ENCODE measurements at regions of chr4 and their contacts with region 1.

Region 1: GRCh38 chr4:89110986-89111832 is at the start of gene TIGD2:
- DNase-seq: peak; percentile 81
- H3K4me3 Mint-ChIP-seq: peak within 1 kb of the TSS; percentile 76
- H3K27ac Mint-ChIP-seq: no peak within 1 kb of the TSS
- H3K4me1 Mint-ChIP-seq: peaks cover 11% of the 10 kb centered on the region
- H3K27me3 Mint-ChIP-seq: peaks cover 18% of the 10 kb centered on the region
- total RNA-seq, gene TIGD2: 1.1 to 1.3 TPM

Region 2: DNA sequence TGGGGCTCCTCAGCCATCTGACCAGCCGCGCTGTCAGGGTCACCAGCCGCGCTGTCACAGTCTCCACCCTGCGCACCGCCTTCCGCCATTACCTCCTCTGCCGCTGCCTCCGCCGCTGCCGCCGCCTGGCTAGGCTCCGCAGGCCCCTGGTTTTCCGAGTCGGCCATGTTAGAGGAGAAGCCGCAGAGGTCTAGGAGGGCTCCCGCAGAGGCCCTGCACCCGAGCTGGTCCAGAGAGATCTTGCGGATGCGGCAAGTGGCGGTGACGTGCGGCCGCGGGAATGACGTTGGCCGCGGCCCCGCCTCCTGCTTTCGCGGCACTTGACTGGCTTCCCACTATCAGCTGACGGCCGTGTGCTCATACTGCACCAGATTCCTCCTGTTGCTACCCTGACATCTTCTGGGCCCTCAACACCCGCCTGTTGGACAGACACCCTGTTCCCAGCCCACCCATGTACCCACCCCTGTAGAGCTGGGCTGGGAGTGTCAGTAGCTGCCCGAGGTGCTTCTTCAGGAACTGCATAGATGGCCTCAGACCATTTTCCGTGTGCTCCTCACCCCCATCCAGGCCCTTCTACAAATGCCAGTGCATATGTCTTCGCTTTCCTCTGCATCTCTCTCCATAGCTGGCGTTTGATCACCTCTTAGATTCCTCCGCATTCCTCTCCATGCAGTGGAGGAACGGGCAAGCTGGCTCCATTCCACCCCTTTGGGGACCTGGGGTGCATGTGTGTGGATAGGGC is 413.4 kb before region 1 on chr4 and contains the start of gene NAP1L5:
- CTCF ChIA-PET with region 1: no interaction called
- intact Hi-C with region 1: loop called (anchors 5 kb)
- DNase-seq: peak; percentile 74
- H3K4me3 Mint-ChIP-seq: peak within 1 kb of the TSS; percentile 82
- H3K27ac Mint-ChIP-seq: peak within 1 kb of the TSS; percentile 78
- H3K4me1 Mint-ChIP-seq: peaks cover 11% of the 10 kb centered on the region
- H3K27me3 Mint-ChIP-seq: no peaks in the 10 kb centered on the region
- total RNA-seq, gene NAP1L5: 3.5 to 3.9 TPM

Region 3: GRCh38 chr4:89024051-89024675 is 87.0 kb before region 1 on chr4:
- CTCF ChIA-PET with region 1: no interaction called
- intact Hi-C with region 1: loop called (anchors 1 kb)
- DNase-seq: peak; percentile 71
- H3K4me3 Mint-ChIP-seq: no peak overlapping the region
- H3K27ac Mint-ChIP-seq: no peak overlapping the region
- H3K4me1 Mint-ChIP-seq: peaks cover 4% of the 10 kb centered on the region
- H3K27me3 Mint-ChIP-seq: no peaks in the 10 kb centered on the region

Region 4: DNA sequence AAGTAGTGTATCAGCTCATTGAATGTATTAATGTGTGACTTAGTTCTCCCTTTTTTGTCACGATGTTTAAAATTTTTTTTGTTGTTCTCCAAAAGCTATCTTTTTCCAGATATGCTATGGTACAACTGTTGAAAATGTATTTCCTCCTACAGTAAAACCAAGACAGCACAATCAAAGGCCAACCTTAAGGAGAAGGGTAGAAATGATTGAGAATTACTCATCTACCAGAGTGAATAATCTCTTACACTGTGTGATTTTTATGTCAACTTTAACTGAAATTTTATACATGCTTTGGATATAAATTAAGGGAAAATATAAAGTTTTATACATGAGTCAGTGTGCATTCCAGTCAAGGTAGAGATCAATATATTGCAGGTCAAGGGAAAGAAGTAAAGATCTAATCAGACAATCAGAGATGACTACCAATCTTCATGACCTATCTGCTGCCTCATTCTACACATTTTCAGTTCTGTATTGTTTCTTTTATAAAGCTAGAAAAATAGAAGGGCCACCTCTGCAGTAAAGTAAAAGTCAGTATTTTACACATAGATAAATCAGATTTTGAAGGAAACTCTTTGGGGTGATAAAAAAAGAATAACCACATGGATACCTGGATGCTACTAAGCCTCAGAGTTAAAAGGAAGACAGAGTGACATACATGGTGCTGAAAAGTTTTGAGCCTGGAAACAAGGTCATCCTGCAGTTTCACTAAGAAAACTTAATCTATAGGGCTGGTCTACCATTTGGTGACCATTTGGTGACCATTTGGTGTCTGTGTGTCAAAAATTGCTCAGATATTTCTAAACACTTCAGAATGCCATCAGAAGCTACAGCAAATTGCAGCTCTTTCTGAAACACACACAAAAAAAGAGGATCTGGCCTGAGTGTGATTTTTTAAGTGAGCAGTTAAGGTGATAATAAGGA is 55.8 kb before region 1 on chr4:
- CTCF ChIA-PET with region 1: no interaction called
- intact Hi-C with region 1: loop called (anchors 2 kb)
- DNase-seq: no peak
- H3K4me3 Mint-ChIP-seq: no peak overlapping the region
- H3K27ac Mint-ChIP-seq: no peak overlapping the region
- H3K4me1 Mint-ChIP-seq: peaks cover 32% of the 10 kb centered on the region
- H3K27me3 Mint-ChIP-seq: peaks cover 7% of the 10 kb centered on the region

Measured in activated naive CD4-positive, alpha-beta T cell treated with anti-CD3 and anti-CD28 coated beads for 36 hours (primary cell).